Left ventricle myocardium inferior (tissue), 1 donor: ENCODE measurements at regions of chr6 and their contacts with region 1.

Region 1: DNA sequence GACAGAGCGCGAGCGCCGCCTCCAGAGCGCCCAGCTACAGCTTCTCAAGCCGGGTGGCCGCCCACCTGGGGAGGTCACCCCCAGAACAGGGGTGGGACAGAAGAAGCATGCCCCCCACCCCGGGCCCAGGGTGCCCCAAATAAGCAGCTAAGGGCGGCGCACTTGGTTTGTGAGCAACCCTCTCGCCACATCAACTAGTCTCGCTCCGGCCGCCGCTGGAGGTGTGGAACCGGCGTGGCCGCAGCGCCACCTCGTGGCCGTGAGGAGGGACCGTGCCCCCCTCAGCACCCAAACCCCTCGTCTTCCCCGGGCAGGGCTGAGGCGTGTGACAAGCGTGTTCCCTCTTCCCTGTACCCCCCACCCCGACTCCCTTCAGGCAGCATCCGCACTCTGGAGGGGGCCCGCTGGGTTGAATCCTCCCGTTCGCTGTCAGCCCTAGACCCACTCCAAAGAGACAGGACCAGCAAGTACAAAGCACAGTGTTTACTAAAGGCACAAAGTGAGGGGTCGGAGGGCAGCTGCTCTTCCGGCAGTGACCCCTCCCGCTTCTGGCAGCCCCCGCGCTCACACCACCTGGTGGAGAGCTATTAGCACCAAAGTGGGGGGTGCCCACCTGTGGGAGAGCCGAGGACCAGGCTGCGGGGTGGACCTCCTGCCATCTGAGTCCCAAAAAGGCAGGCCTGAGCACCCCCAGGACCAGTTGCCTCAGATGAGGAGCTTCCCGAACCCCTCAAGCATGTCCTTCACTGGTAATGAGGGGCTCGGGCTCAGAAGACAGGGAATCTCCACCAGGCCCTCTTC is 45.4 kb downstream of the MDFI start:
- DNase-seq: peak; percentile 83
- H3K4me3 ChIP-seq: peak overlapping the region; percentile 67
- H3K27ac ChIP-seq: peak overlapping the region; percentile 86
- H3K4me1 ChIP-seq: peaks cover 34% of the 10 kb centered on the region
- H3K27me3 ChIP-seq: no peaks in the 10 kb centered on the region
- CTCF ChIP-seq: peak; percentile 95

Region 2: GRCh38 chr6:41367700-41368099 is 316.0 kb before region 1 on chr6:
- intact Hi-C with region 1: loop called (anchors 5 kb)
- DNase-seq: peak; percentile 28
- H3K4me3 ChIP-seq: no peak overlapping the region
- H3K27ac ChIP-seq: no peak overlapping the region
- H3K4me1 ChIP-seq: peaks cover 20% of the 10 kb centered on the region
- H3K27me3 ChIP-seq: peaks cover 97% of the 10 kb centered on the region
- CTCF ChIP-seq: peak; percentile 73

Region 3: GRCh38 chr6:41463062-41463930 is 220.4 kb before region 1 on chr6:
- intact Hi-C with region 1: loop called (anchors 10 kb)
- DNase-seq: peak; percentile 73
- H3K4me3 ChIP-seq: no peak overlapping the region
- H3K27ac ChIP-seq: no peak overlapping the region
- H3K4me1 ChIP-seq: no peaks in the 10 kb centered on the region
- H3K27me3 ChIP-seq: peaks cover 54% of the 10 kb centered on the region
- CTCF ChIP-seq: peak; percentile 77

Region 4: DNA sequence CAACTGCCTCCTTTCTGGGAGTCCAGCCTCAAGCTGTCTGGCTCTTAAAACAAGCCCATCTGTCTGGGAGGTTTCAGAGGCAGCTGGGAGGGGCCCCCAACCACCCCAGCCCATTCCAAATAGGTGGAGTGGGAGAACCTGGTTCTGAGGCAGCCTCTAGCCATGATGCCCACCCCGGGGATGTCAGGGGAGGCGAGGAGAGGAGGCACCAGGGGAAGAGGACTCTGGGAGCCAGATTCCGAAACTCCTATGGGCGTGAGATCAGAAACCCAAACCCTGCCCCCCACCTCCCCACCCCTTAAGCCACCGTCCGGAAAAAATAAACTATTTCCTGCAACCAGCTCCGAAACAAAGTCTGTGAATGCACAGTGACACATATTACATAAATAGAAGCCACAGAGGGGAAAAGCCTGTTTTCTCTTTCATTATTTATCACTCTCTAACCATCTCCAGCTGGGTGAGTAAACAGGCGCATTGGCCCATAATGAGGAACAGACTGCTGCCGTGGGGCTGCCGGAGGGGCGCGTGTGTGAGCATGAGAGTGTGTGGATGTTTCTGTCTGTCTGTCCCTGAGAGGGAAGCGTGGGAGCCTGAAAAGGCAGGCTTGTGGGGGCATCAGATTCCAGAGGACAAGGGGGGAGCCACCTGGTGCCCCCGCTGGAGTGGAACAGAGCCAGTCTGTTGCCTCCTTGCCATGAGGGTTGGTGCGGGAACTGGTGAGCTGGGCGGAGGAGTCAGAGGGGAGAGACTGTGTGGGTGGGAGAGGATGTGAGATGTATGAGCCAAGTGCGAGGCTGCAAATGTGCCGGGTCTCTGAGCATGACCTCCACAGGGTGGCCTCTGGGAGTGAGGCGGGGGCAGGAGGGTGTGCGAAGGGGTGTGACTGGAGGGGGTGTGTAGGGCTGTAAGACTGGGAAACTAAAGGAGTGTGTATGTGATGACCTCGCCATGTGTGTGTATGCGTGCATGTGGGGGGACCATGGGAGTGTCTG is 151.8 kb before region 1 on chr6:
- intact Hi-C with region 1: no loop called
- DNase-seq: no peak
- H3K4me3 ChIP-seq: no peak overlapping the region
- H3K27ac ChIP-seq: no peak overlapping the region
- H3K4me1 ChIP-seq: peaks cover 21% of the 10 kb centered on the region
- H3K27me3 ChIP-seq: peaks cover 89% of the 10 kb centered on the region
- CTCF ChIP-seq: no peak

Region 5: DNA sequence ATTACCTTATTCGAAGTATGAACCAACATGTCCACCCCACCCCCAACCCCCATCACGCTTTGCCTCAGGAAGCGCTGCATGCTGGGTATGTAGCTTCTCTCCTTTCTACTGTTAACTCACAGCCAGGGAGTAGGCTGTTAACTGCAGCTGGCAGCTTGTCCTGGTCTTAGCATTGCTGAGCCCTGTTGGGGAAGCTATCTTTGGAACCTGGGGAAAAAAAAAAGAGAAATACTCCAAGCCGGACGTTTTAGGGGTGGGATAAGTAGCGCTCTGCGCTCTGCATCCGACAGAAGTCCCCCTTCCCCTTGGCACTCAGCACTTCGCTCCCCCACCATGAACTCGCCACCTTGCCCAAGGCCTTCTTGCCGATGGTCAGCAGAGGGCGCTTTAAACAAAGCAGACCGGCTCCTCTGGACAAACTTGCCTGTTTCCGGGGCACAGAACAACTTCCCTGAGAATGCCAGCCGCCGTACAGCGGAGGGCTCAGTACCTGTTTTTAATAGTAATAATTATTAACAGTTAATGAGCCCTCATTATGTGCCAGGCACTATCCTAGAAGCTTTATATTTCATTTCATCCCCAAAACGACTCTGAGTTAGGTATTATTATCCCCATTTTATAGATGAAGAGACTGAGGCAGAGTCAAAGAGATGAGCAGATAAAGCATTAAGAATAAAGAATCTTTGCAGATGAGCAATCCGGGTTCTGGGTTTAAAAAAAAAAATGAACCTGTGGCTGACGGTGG is 80.7 kb before region 1 on chr6:
- intact Hi-C with region 1: loop called (anchors 2 kb)
- DNase-seq: peak; percentile 70
- H3K4me3 ChIP-seq: peak overlapping the region; percentile 47
- H3K27ac ChIP-seq: no peak overlapping the region
- H3K4me1 ChIP-seq: peaks cover 9% of the 10 kb centered on the region
- H3K27me3 ChIP-seq: no peaks in the 10 kb centered on the region
- CTCF ChIP-seq: peak; percentile 94